Sigmoid colon (tissue), 7 donors: ENCODE measurements at regions of chr4 and their contacts with region 1.

Region 1: GRCh38 chr4:6269616-6270511 is at the start of gene WFS1:
- DNase-seq: peak; percentile 99
- H3K4me3 ChIP-seq: peak within 1 kb of the TSS; percentile 64 to 86 (median 84)
- H3K27ac ChIP-seq: peak within 1 kb of the TSS; percentile 87 to 96 (median 91)
- H3K4me1 ChIP-seq: peaks cover 0 to 54% (median 50%) of the 10 kb centered on the region in 4 donors
- H3K27me3 ChIP-seq: no peaks in the 10 kb centered on the region
- CTCF ChIP-seq: no peak
- EP300 ChIP-seq: no peak
- POLR2A ChIP-seq: peak; percentile 69 to 82
- total RNA-seq, gene WFS1: 34.6 to 69.0 (median 47.2) TPM

Region 2: DNA sequence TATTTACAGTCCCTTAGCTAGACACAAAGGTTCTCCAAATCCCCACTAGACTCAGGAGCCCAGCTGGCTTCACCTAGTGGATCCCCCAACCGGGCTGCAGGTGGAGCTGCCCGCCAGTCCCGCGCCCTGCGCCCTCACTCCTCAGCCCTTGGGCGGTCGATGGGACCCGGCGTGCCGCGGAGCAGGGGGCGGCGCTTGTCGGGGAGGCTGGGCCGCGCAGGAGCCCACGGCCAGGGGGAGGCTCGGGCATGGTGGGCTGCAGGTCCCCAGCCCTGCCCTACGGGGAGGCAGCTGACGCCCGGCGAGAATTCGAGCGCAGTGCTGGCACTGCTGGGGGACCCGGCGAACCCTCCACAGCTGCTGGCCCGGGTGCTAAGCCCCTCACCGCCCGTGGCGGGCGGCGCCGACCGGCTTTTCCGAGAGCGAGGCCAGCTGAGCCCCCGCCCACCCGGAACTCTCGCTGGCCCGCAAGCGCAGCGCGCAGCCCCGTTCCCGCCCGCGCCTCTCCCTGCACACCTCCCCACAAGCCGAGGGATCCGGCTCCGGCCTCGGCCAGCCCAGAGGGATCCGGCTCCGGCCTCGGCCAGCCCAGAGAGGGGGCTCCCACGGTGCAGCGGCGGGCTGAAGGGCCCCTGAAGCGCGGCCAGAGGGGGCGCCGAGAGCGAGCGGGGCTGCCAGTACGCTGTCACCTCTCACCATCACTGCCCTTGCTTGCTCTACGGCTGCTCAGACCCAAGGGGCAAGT is 39.2 kb after region 1 on chr4:
- intact Hi-C with region 1: loop called (anchors 5 kb)
- DNase-seq: no peak
- H3K4me3 ChIP-seq: peak overlapping the region; percentile 37 to 60 (median 48)
- H3K27ac ChIP-seq: peak overlapping the region in 2 of 4 donors; percentile 32 to 39
- H3K4me1 ChIP-seq: peaks cover 0 to 13% (median 12%) of the 10 kb centered on the region in 4 donors
- H3K27me3 ChIP-seq: no peaks in the 10 kb centered on the region
- CTCF ChIP-seq: no peak
- EP300 ChIP-seq: no peak
- POLR2A ChIP-seq: no peak

Region 3: DNA sequence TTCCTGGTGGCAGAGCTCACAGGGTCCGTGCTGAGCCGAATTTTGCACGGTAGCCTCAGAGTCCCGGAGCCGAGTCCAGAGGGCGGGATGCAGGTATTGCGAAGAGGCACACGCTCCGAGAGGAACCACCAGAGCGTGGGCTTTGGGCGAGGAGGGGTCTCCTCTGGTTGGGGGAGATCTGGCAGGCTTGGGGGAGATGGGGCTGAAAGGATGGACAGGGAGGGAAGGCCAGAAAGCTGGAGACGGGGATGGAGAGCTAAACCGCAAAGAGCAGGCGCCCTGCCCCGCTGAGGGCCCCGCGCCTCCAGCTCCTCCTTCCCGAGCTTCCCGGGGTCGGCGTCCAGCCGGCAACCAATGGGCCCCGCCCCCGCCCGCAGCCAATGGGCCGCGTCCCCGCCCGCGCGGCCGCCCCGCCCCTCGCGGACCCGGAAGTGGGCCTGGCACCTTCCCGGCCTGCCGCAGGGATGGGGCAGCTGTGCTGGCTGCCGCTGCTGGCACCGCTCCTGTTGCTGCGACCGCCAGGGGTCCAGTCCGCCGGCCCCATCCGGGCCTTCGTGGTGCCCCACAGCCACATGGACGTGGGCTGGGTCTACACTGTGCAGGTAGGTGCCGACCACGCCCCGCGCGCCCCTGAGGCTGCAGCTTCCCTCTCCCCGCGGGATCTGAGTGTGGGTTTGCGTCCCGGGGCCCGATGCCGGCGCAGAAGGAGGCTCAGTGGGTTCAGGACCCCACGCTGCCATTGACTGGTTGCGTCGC is 305.1 kb after region 1 on chr4 and contains the start of gene MAN2B2:
- intact Hi-C with region 1: loop called (anchors 10 kb)
- DNase-seq: peak; percentile 93
- H3K4me3 ChIP-seq: peak within 1 kb of the TSS; percentile 71 to 93 (median 86)
- H3K27ac ChIP-seq: peak within 1 kb of the TSS; percentile 74 to 81 (median 76)
- H3K4me1 ChIP-seq: peaks cover 0 to 24% (median 17%) of the 10 kb centered on the region in 4 donors
- H3K27me3 ChIP-seq: no peaks in the 10 kb centered on the region
- CTCF ChIP-seq: no peak
- EP300 ChIP-seq: no peak
- POLR2A ChIP-seq: peak in 1 of 2 donors; percentile 32
- total RNA-seq, gene MAN2B2: 12.7 to 24.3 (median 20.2) TPM

Region 4: DNA sequence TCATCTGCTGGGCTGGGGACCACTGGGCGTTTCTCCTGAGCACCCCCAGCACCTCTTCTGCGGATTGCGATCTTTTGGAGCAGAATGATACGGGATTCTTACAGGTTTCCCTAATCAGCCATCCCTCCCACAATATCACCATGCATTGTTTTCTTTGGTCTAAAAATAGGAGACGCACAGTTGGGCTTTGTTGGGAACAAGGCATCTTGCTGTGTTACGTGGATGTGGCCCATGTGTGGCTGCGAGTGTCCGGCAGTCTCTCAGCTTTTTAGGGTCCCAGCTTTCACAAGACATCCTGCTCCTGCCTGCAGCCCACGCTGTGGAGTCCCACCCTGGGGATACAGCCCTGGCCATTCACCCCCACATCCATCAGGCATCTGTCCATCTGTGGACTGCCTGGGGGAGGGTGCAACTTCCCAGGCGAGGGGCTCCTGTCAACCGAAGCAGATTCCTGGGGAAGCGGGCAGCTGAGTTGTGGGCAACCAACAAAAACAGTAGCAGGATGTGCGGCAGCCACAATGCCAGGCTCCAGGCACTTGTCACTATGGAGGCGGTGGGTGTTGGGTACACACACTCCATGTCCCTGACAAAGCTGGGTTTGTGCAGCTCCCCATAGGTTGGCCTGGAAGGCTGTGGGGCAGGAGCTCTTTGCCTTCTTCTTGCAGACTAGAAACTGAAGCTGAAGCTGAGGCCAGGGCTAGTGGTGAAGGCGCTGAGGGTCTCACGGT is 1350.4 kb after region 1 on chr4:
- intact Hi-C with region 1: no loop called
- DNase-seq: no peak
- H3K4me3 ChIP-seq: no peak overlapping the region
- H3K27ac ChIP-seq: no peak overlapping the region
- H3K4me1 ChIP-seq: peaks cover 0 to 6% (median 0%) of the 10 kb centered on the region in 4 donors
- H3K27me3 ChIP-seq: no peaks in the 10 kb centered on the region
- CTCF ChIP-seq: no peak
- EP300 ChIP-seq: no peak
- POLR2A ChIP-seq: no peak